ENCODE measurements at regions of chr15 and their contacts with region 1.

Region 1: GRCh38 chr15:81265944-81266775 is 57.8 kb downstream of the STARD5 start:
- DNase-seq: peak; percentile 91
- ATAC-seq: peak; percentile 92
- H3K4me3 Mint-ChIP-seq: peak overlapping the region; percentile 49
- H3K27ac Mint-ChIP-seq: peak overlapping the region; percentile 63
- H3K4me1 Mint-ChIP-seq: peaks cover 56% of the 10 kb centered on the region
- H3K27me3 Mint-ChIP-seq: no peaks in the 10 kb centered on the region

Region 2: DNA sequence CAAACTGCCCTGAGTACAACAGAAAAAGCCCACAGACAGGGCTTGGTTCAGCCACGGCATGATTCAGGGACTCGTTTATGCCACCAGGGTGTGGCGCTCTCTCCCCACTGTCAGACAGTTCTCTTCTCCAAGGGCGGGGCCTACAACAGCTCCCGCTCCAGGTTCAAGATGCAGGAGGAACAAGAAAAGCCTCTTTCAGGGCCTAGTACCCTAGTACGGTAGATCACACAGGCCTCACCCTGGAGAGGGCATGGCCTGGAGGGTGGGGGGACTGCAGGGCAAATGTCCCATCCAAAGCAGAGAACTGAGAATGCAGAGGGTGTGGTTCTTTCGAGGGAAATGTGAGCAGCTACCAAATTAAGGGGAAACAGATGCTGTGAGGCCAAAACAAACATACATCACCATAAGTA is 288.5 kb before region 1 on chr15:
- CTCF ChIA-PET with region 1: interaction called, 26 read pairs
- POLR2A ChIA-PET with region 1: no interaction called
- DNase-seq: peak; percentile 48
- ATAC-seq: peak; percentile 55
- H3K4me3 Mint-ChIP-seq: no peak overlapping the region
- H3K27ac Mint-ChIP-seq: peak overlapping the region; percentile 33
- H3K4me1 Mint-ChIP-seq: peaks cover 43% of the 10 kb centered on the region
- H3K27me3 Mint-ChIP-seq: no peaks in the 10 kb centered on the region

Region 3: DNA sequence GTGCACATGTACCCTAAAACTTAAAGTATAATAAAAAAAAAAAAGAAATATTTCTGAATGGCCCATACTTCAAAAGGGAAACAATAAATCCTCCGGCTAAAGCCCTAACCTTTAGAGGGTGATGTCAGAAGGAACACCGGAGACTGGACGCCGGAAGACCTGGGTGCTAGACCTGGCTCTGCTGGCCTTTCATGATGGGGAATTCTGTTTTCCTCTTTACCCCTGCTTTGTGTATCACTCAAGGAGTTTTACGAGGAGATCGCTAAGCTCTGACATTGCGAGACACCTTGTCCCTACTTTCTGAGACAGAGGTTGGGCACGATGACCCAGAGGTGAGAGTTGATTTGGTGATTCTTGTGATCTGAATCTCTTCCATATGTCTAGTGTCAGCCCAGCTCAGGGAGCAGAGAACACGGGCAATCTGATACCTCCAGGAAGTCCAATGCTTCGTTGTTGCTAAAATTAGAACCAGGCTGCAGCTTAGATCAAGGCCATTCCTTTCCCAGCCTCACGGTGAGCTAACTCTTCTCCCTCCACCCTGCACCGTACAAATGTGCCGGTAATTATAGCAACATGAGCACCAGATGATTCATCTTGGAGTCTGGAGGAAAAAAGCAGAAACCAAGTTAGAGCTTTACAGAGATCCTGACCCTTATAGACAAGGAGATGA is 174.1 kb before region 1 on chr15:
- CTCF ChIA-PET with region 1: interaction called, 13 read pairs
- POLR2A ChIA-PET with region 1: no interaction called
- DNase-seq: no peak
- ATAC-seq: no peak
- H3K4me3 Mint-ChIP-seq: no peak overlapping the region
- H3K27ac Mint-ChIP-seq: no peak overlapping the region
- H3K4me1 Mint-ChIP-seq: no peaks in the 10 kb centered on the region
- H3K27me3 Mint-ChIP-seq: peaks cover 34% of the 10 kb centered on the region

Region 4: GRCh38 chr15:81176291-81176893 is 89.8 kb before region 1 on chr15:
- CTCF ChIA-PET with region 1: interaction called, 430 read pairs
- POLR2A ChIA-PET with region 1: no interaction called
- DNase-seq: no peak
- ATAC-seq: no peak
- H3K4me3 Mint-ChIP-seq: no peak overlapping the region
- H3K27ac Mint-ChIP-seq: no peak overlapping the region
- H3K4me1 Mint-ChIP-seq: no peaks in the 10 kb centered on the region
- H3K27me3 Mint-ChIP-seq: peaks cover 20% of the 10 kb centered on the region

Region 5: GRCh38 chr15:81244306-81244705 is 21.9 kb before region 1 on chr15:
- CTCF ChIA-PET with region 1: interaction called, 18 read pairs
- POLR2A ChIA-PET with region 1: no interaction called
- DNase-seq: no peak
- ATAC-seq: no peak
- H3K4me3 Mint-ChIP-seq: no peak overlapping the region
- H3K27ac Mint-ChIP-seq: no peak overlapping the region
- H3K4me1 Mint-ChIP-seq: no peaks in the 10 kb centered on the region
- H3K27me3 Mint-ChIP-seq: peaks cover 11% of the 10 kb centered on the region

Region 6: GRCh38 chr15:81330366-81331090 is 64.4 kb after region 1 on chr15:
- CTCF ChIA-PET with region 1: interaction called, 73 read pairs
- POLR2A ChIA-PET with region 1: no interaction called
- DNase-seq: no peak
- ATAC-seq: no peak
- H3K4me3 Mint-ChIP-seq: no peak overlapping the region
- H3K27ac Mint-ChIP-seq: no peak overlapping the region
- H3K4me1 Mint-ChIP-seq: peaks cover 17% of the 10 kb centered on the region
- H3K27me3 Mint-ChIP-seq: no peaks in the 10 kb centered on the region

Region 7: GRCh38 chr15:81400640-81401236 is 134.6 kb after region 1 on chr15:
- CTCF ChIA-PET with region 1: interaction called, 97 read pairs
- POLR2A ChIA-PET with region 1: no interaction called
- DNase-seq: peak; percentile 31
- ATAC-seq: peak; percentile 39
- H3K4me3 Mint-ChIP-seq: no peak overlapping the region
- H3K27ac Mint-ChIP-seq: no peak overlapping the region
- H3K4me1 Mint-ChIP-seq: no peaks in the 10 kb centered on the region
- H3K27me3 Mint-ChIP-seq: no peaks in the 10 kb centered on the region

Region 8: GRCh38 chr15:81575436-81576123 is 309.4 kb after region 1 on chr15:
- CTCF ChIA-PET with region 1: no interaction called
- POLR2A ChIA-PET with region 1: no interaction called
- DNase-seq: no peak
- ATAC-seq: no peak
- H3K4me3 Mint-ChIP-seq: no peak overlapping the region
- H3K27ac Mint-ChIP-seq: no peak overlapping the region
- H3K4me1 Mint-ChIP-seq: no peaks in the 10 kb centered on the region
- H3K27me3 Mint-ChIP-seq: no peaks in the 10 kb centered on the region